ENCODE measurements at regions of chr2 and their contacts with region 1.

Region 1: GRCh38 chr2:97697252-97698235 is 15.8 kb upstream of the ZAP70 start:
- DNase-seq: peak; percentile 61
- H3K4me3 ChIP-seq: no peak overlapping the region
- H3K27ac ChIP-seq: no peak overlapping the region
- H3K4me1 ChIP-seq: peaks cover 4% of the 10 kb centered on the region
- H3K27me3 ChIP-seq: no peaks in the 10 kb centered on the region
- CTCF ChIP-seq: peak; percentile 91 to 94

Region 2: GRCh38 chr2:96756788-96757479 is 940.6 kb before region 1 on chr2:
- CTCF ChIA-PET with region 1: no interaction called
- dilution Hi-C with region 1: no loop called
- in situ Hi-C with region 1: no loop called
- intact Hi-C with region 1: no loop called
- DNase-seq: no peak
- H3K4me3 ChIP-seq: no peak overlapping the region
- H3K27ac ChIP-seq: no peak overlapping the region
- H3K4me1 ChIP-seq: peaks cover 28% of the 10 kb centered on the region
- H3K27me3 ChIP-seq: no peaks in the 10 kb centered on the region
- CTCF ChIP-seq: peak in 1 of 2 donors; percentile 32

Region 3: DNA sequence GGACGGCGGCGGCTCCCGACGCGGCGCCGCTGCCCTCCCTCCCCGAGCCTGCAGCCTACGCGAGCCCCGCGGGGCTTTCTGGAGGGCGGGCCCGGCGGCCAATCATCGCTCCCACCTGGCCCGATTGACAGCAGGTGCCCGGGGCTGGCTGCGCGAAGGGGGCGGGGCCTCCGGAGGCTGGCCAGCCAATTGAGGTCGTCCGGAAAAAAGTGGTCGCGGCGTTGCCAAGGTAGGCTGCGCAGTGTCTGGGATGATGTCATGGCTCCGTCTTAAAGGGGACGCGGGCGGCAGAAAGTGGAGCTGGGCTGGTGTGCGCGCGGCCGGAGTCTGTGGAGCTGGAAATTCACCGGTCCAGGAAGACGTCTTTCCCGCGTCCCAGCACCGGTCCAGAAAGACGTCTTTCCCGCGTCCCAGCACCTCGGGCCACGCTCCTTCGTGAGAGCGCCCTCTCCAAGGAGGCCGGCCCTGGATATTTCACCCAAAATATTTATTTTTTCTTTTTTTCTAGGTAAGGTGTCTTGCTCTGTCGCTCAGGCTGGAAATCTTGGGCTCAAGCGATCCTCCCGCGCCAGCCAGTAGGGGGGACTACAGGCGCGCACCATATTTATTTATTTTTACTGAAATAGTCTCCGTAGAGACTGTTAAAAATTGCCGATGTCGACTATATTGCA is 33.4 kb before region 1 on chr2 and contains the start of gene ACTR1B:
- CTCF ChIA-PET with region 1: interaction called, 4 read pairs
- dilution Hi-C with region 1: no loop called
- in situ Hi-C with region 1: no loop called
- intact Hi-C with region 1: loop called (anchors 1 kb)
- DNase-seq: peak; percentile 98
- H3K4me3 ChIP-seq: peak within 1 kb of the TSS; percentile 70 to 99 (median 75)
- H3K27ac ChIP-seq: peak within 1 kb of the TSS; percentile 89
- H3K4me1 ChIP-seq: peaks cover 15% of the 10 kb centered on the region
- H3K27me3 ChIP-seq: no peaks in the 10 kb centered on the region
- CTCF ChIP-seq: peak; percentile 42 to 63
- total RNA-seq, gene ACTR1B: 51.8 to 56.4 TPM

Region 4: DNA sequence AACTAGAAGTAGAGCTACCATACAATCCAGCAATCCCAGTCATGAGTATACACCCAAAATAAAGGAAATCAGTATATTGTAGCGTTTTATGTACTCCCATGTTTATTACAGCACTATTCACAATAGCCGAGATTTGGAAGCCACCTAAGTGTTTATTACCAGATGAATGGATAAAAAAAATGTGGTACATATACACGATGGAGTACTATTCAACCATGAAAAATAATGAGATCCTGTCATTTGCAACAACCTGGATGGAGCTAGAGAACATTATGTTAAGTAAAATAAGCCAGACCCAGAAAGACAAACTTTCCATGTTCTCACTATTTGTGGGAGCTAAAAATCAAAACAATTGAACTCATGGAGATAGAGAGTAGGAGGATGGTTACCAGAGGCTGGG is 166.3 kb after region 1 on chr2:
- CTCF ChIA-PET with region 1: interaction called, 11 read pairs
- dilution Hi-C with region 1: no loop called
- in situ Hi-C with region 1: no loop called
- intact Hi-C with region 1: no loop called
- DNase-seq: no peak
- H3K4me3 ChIP-seq: no peak overlapping the region
- H3K27ac ChIP-seq: no peak overlapping the region
- H3K4me1 ChIP-seq: peaks cover 14% of the 10 kb centered on the region
- H3K27me3 ChIP-seq: no peaks in the 10 kb centered on the region
- CTCF ChIP-seq: no peak

Region 5: DNA sequence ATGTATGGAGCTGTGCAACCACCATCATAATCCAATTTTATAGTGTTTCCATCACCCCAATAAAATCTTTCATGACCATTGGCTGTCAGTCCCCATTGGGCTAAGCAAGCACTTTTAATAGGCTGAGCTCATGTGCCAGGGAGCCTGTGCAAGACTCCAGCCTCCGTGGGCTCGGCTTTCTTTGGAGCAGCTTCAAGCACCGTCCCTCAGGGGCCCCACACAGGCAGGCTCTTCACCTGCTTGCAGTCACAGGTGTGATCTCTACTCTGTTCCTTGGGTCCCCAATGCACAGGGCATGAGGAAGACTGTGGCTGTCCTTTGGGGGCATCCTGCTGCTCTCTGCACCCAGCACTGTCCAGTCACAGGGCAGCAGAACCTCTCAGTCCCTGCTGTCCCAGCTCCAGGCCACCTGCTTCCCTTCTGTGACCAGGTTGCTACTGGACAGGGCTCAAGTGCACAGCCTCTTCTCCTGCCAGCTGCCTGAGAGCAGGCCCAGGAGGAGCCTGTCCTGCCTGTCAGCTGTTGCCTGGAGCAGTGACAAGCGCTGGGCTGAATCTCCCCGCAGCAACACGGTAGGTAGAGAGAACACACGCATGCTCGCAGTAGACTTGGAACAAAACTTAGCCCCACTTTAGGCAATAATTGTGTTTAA is 338.9 kb after region 1 on chr2:
- CTCF ChIA-PET with region 1: no interaction called
- dilution Hi-C with region 1: no loop called
- in situ Hi-C with region 1: no loop called
- intact Hi-C with region 1: no loop called
- DNase-seq: no peak
- H3K4me3 ChIP-seq: no peak overlapping the region
- H3K27ac ChIP-seq: no peak overlapping the region
- H3K4me1 ChIP-seq: no peaks in the 10 kb centered on the region
- H3K27me3 ChIP-seq: no peaks in the 10 kb centered on the region
- CTCF ChIP-seq: no peak

Region 6: GRCh38 chr2:98269274-98269673 is 571.7 kb after region 1 on chr2:
- CTCF ChIA-PET with region 1: no interaction called
- dilution Hi-C with region 1: no loop called
- in situ Hi-C with region 1: no loop called
- intact Hi-C with region 1: loop called (anchors 1 kb)
- DNase-seq: peak; percentile 43
- H3K4me3 ChIP-seq: no peak overlapping the region
- H3K27ac ChIP-seq: no peak overlapping the region
- H3K4me1 ChIP-seq: no peaks in the 10 kb centered on the region
- H3K27me3 ChIP-seq: no peaks in the 10 kb centered on the region
- CTCF ChIP-seq: peak; percentile 78

Region 7: DNA sequence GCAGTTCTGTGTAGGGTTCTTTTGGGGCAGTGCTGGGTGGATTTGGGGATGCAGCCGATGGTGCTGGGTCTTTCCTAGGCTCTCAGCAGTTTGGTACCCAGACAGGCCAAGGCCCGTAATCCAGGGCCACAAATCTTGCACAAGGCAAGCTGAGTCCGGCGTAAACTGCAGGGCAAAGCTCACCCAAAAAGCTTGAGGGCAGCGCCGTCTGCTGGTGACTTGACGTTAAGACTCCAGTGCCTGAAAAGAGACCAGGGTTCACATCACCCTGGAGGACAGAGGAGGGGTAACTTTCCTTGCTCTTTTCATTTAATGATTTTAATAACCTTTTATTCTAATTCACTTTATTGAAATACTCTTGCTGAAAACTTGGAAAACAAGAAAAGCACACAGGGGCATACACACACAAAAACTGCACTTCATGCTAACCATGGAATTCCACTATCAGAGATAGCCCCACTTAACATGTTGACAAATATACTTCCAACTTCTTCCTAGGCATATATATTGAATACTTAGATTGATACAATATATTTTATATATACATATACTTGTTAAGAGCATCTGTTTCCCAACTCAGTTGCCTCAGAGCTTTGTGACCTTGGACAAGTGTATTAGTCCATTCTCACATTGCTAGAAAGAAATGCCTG is 687.6 kb after region 1 on chr2:
- CTCF ChIA-PET with region 1: no interaction called
- dilution Hi-C with region 1: no loop called
- in situ Hi-C with region 1: loop called in 1 of 2 experiments (anchors 25 kb)
- intact Hi-C with region 1: loop called (anchors 1 kb)
- DNase-seq: peak; percentile 64
- H3K4me3 ChIP-seq: no peak overlapping the region
- H3K27ac ChIP-seq: no peak overlapping the region
- H3K4me1 ChIP-seq: no peaks in the 10 kb centered on the region
- H3K27me3 ChIP-seq: peaks cover 9% of the 10 kb centered on the region
- CTCF ChIP-seq: peak; percentile 100

Measured in mammary epithelial cell (primary cell).